ENCODE measurements at regions of chr5 and their contacts with region 1.

Region 1: GRCh38 chr5:93570294-93571113 is 10.5 kb downstream of the NR2F1-AS1 start:
- DNase-seq: peak; percentile 33
- ATAC-seq: peak; percentile 44
- H3K4me3 Mint-ChIP-seq: no peak overlapping the region
- H3K27ac Mint-ChIP-seq: no peak overlapping the region
- H3K4me1 Mint-ChIP-seq: peaks cover 24% of the 10 kb centered on the region
- H3K27me3 Mint-ChIP-seq: peaks cover 68% of the 10 kb centered on the region

Region 2: GRCh38 chr5:93602241-93603077 is 32.0 kb after region 1 on chr5:
- CTCF ChIA-PET with region 1: interaction called, 5 read pairs
- POLR2A ChIA-PET with region 1: no interaction called
- intact Hi-C with region 1: loop called (anchors 1 to 5 kb)
- DNase-seq: no peak
- ATAC-seq: no peak
- H3K4me3 Mint-ChIP-seq: no peak overlapping the region
- H3K27ac Mint-ChIP-seq: no peak overlapping the region
- H3K4me1 Mint-ChIP-seq: peaks cover 8% of the 10 kb centered on the region
- H3K27me3 Mint-ChIP-seq: peaks cover 53% of the 10 kb centered on the region

Region 3: GRCh38 chr5:94562327-94562971 is 991.9 kb after region 1 on chr5:
- CTCF ChIA-PET with region 1: no interaction called
- POLR2A ChIA-PET with region 1: no interaction called
- intact Hi-C with region 1: no loop called
- DNase-seq: no peak
- ATAC-seq: no peak
- H3K4me3 Mint-ChIP-seq: no peak overlapping the region
- H3K27ac Mint-ChIP-seq: no peak overlapping the region
- H3K4me1 Mint-ChIP-seq: no peaks in the 10 kb centered on the region
- H3K27me3 Mint-ChIP-seq: no peaks in the 10 kb centered on the region

Measured in activated CD4-positive, alpha-beta T cell treated with anti-CD3 and anti-CD28 coated beads for 36 hours (primary cell).